ENCODE measurements at regions of chr5 and their contacts with region 1.

Region 1: GRCh38 chr5:134527146-134527960 is 1.9 kb downstream of the JADE2 start:
- DNase-seq: peak; percentile 90
- ATAC-seq: peak; percentile 56 to 63

Region 2: DNA sequence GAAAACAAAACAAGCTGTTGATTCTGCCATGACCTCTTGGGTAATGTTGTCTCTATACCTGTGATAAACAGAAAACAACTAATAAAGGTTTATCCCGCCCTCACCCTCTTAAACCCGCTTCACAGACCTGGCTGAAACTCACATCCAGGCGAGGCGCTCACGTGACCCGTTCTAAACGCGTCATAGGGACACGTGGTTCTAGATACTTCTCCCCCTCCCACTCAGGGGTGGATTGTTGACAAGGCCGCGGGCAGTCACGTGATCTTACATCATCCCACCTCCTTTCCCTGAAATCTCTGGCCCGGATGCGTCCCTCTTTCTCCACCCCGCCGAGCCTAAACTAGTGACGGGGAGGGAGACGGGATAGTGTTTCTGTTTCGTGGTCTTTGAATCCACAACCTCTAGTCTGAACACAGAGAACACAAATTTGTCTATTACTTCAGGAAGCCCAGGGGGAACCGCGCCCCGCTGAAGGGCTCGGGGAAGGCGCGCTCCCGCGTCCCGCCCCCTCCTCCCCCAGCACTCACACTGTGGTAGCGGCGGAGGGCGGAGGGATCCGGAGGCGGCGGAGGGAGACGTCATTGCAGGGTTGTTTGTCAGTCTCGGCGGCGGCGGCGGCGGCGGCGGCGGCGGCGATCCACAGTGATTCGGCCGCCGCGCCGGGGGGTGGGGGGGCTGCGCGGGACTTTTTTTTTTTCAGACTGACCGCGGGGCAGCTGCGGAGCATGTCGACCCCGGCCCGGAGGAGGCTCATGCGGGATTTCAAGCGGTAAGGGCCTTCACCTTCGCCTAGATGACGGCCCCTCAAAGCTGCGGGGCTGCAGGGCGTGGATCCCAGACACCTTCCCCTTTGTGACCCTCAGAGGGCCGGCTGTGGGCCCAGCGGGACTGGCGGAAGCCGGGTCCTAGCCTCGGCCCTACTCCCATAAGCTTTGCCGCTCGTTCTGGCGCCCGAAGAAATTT is 156.2 kb before region 1 on chr5 and contains the start of gene UBE2B:
- intact Hi-C with region 1: loop called in 1 of 2 experiments (anchors 5 kb)
- DNase-seq: peak; percentile 98
- ATAC-seq: peak; percentile 94
- total RNA-seq, gene UBE2B: 146 to 166 TPM

Region 3: DNA sequence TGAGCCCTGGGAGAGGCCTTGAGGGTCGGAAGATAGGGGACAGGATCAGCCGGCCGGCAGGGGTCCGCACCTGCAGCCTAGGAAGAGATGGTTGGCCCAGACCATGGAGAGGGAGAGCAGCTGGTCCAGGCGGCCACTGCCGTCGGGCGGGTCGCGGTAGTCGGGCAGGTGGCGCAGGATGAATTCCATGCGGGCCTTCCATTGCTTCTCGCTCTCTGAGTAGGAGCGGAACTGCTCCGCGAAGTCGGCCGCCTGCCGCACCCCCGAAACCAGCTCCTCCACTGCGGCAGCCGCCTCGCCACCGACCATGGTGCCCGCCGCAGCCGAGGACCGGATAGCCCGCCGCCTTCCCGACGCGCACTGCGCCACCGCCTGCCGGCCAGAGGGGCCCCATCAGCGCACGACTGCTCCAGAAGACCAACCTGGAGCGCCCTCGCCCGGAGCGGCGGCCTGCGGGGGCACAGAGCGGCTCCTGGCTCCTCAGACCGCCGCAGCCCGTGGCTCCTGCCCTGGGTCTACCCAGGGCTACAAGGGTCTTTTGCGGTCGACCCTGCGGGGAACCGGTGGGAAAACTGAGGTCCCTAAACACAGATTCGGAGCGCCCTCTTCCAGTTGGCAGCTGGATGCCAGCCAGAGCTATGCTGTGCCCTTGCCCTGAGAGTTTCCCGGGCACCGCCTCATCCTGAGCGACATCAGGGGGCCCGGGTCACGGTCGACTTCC is 115.6 kb before region 1 on chr5 and contains the start of gene CDKN2AIPNL:
- intact Hi-C with region 1: loop called in 1 of 2 experiments (anchors 5 kb)
- DNase-seq: peak; percentile 94
- ATAC-seq: peak; percentile 99 to 100
- total RNA-seq, gene CDKN2AIPNL: 29.1 to 34.4 TPM

Region 4: GRCh38 chr5:134436523-134437339 is 90.6 kb before region 1 on chr5:
- intact Hi-C with region 1: loop called in 1 of 2 experiments (anchors 2 kb)
- DNase-seq: peak; percentile 74
- ATAC-seq: peak; percentile 75 to 78

Region 5: DNA sequence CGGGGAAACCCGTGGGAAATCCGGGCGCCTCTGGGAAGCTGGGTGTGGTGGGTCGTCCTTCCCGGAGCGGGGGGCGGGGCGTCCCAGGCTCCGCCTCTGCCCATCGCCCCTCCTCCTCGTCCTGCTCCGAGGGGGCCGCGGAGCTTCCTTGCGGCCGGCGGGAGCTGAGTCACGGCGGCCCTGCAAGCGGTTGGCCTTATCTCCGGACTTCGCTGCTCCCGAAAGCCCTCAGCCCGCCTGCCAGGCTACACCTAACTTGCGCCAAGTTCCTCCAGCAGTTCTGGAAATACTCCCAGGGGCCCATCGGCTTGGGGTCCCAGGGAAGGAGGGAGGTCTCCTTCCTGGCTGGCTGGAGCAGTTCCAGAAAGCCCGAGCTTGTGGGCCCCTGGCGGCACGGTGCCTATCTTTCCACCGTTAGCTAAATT is 61.5 kb before region 1 on chr5:
- intact Hi-C with region 1: loop called (anchors 1 to 5 kb)
- DNase-seq: peak; percentile 94
- ATAC-seq: peak; percentile 83 to 93

Region 6: DNA sequence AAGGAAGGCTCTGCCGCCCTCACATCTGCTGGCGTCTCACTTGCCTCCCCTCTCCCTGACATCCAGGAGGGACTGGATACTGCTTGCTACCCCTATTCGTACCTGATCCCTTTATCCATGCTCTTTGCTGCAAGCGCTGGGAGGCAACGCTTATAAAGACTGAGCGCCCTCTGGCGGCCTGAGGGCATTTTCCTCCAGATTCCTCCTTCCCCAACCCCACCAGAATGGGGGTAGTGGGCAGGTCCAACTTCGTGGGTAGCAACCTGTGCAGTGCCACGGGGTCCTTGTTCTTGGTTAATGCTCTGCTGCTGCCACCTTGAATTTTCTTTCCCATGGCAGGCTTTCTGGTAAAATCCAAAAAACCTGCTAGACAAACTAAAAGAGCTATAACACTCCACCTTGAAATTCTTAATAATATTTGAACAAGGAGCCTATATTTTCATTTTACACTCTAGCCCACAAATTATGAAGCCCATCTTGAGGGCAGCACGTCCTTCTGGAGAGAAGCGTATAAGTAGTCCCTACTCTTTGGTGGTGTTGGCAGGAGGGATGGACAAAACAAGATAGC is 50.5 kb after region 1 on chr5:
- intact Hi-C with region 1: loop called (anchors 2 to 5 kb)
- DNase-seq: peak; percentile 85
- ATAC-seq: peak; percentile 25 to 66

Region 7: GRCh38 chr5:134626369-134627014 is 99.1 kb after region 1 on chr5:
- intact Hi-C with region 1: no loop called
- DNase-seq: no peak
- ATAC-seq: peak; percentile 68 to 74

Region 8: GRCh38 chr5:134648425-134649162 is 121.2 kb after region 1 on chr5 and contains the start of gene SEC24A:
- intact Hi-C with region 1: no loop called
- DNase-seq: peak; percentile 93
- ATAC-seq: peak; percentile 97
- total RNA-seq, gene SEC24A: 10.1 to 15.9 TPM

Measured in left cardiac atrium (tissue), 4 donors.